ENCODE measurements at regions of chr15 and their contacts with region 1.

Region 1: DNA sequence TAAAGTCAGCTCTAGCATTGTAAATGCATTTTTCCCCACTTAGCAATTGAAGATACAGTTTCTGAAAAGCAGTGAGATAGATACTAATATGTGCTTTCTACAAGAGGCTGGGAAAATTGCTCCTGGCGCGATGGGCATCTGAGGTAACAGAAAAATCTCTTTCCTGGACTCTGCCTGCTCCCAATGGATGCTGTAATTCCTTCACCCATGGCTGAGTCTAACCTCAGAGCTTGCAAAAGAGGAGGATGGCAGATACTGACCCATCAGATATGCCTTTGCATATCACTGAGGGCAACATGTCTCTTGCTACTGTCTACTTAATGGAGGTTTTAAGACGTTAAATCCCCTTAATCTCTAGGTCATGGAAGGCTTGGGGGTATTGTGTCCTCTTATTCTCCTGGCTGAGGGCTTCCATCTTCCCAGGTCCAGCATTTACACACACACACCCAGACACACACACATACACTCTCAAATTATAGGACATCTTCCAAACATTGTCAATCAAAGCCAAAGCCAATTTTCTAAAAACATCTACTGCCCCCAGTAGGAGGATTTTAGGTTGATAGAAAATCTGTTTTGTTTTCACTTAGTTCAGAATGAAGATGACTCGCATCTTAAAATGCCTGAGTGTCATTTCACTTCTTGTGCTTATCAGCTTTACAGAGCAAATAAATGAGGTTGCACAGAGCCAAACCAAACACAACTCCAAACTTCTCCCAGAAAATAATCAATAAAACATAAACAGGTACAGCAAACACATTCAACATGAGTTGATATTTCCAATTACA is 2.4 kb downstream of the TRPM1 start:
- DNase-seq: no peak
- ATAC-seq: no peak
- H3K4me3 ChIP-seq: no peak overlapping the region
- H3K4me3 Mint-ChIP-seq: no peak overlapping the region
- H3K27ac ChIP-seq: no peak overlapping the region
- H3K27ac Mint-ChIP-seq: no peak overlapping the region
- H3K4me1 ChIP-seq: no peaks in the 10 kb centered on the region
- H3K4me1 Mint-ChIP-seq: no peaks in the 10 kb centered on the region
- H3K27me3 ChIP-seq: no peaks in the 10 kb centered on the region
- H3K27me3 Mint-ChIP-seq: no peaks in the 10 kb centered on the region
- CTCF ChIP-seq: no peak

Region 2: DNA sequence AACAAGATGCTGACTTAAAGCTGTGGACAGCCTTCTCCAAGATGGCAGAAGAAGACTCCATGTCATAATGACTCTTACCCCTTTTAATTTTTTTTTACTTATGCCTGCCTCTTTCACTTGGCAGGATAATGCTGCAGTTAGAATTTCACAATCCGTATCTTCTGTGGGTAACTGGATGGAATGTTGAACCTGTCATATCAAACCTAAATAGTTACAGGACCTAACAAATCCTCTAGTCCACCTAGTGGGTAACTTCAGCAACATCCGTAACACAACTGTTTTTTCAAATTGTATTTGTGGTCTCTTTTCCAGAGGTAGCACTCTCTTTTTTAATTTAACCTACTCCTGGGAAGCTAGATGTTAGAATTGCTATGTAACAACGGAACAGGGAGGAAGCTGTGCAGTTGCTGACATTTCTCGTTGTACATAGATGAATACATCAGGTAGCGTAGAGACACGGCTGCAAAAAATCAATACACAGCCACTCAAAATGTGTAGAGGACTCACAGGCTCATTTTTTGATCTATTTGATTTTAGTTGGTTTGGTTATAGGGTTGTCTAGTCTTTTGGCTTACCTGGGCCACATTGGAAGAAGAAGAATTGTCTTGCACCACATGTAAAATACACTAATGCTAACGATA is 46.2 kb after region 1 on chr15:
- CTCF ChIA-PET with region 1: no interaction called
- POLR2A ChIA-PET with region 1: no interaction called
- intact Hi-C with region 1: loop called in 1 of 2 experiments (anchors 5 kb)
- DNase-seq: no peak
- ATAC-seq: no peak
- H3K4me3 ChIP-seq: no peak overlapping the region
- H3K4me3 Mint-ChIP-seq: no peak overlapping the region
- H3K27ac ChIP-seq: no peak overlapping the region
- H3K27ac Mint-ChIP-seq: no peak overlapping the region
- H3K4me1 ChIP-seq: no peaks in the 10 kb centered on the region
- H3K4me1 Mint-ChIP-seq: no peaks in the 10 kb centered on the region
- H3K27me3 ChIP-seq: no peaks in the 10 kb centered on the region
- H3K27me3 Mint-ChIP-seq: no peaks in the 10 kb centered on the region
- CTCF ChIP-seq: no peak

Measured in CD4-positive, alpha-beta T cell (primary cell).